ENCODE measurements at regions of chr10 and their contacts with region 1.

Region 1: GRCh38 chr10:124824507-124824906 is 22.9 kb downstream of the ABRAXAS2 start:
- DNase-seq: no peak
- ATAC-seq: no peak
- H3K4me3 ChIP-seq: no peak overlapping the region
- H3K27ac ChIP-seq: no peak overlapping the region
- H3K4me1 ChIP-seq: no peaks in the 10 kb centered on the region
- H3K27me3 ChIP-seq: no peaks in the 10 kb centered on the region
- CTCF ChIP-seq: no peak

Region 2: DNA sequence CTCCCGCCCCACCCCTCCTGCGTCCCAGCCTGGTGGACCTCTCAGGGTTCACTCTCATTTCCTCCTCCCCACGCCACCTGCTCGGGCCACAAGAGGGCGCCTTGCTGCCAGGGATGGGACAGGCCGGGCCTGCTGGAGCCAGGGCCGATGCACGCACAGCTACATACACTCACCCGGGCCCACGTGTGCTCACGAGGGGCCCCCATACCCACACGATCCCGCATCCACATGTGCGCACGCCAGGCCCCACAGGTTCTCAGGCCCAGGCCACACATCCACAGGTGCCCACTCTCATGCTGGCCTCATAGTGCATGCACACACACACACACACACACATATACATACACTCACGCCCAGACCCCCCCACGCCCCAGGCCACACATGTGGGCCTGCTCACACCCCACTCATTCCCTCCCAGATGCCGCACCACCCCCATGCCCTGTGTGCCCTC is 294.3 kb before region 1 on chr10:
- intact Hi-C with region 1: loop called in 1 of 2 experiments (anchors 5 kb)
- DNase-seq: peak; percentile 60 to 98 (median 88)
- ATAC-seq: peak; percentile 95
- H3K4me3 ChIP-seq: no peak overlapping the region
- H3K27ac ChIP-seq: no peak overlapping the region
- H3K4me1 ChIP-seq: peaks cover 0 to 21% of the 10 kb centered on the region in 2 donors
- H3K27me3 ChIP-seq: no peaks in the 10 kb centered on the region
- CTCF ChIP-seq: peak; percentile 82 to 92

Region 3: DNA sequence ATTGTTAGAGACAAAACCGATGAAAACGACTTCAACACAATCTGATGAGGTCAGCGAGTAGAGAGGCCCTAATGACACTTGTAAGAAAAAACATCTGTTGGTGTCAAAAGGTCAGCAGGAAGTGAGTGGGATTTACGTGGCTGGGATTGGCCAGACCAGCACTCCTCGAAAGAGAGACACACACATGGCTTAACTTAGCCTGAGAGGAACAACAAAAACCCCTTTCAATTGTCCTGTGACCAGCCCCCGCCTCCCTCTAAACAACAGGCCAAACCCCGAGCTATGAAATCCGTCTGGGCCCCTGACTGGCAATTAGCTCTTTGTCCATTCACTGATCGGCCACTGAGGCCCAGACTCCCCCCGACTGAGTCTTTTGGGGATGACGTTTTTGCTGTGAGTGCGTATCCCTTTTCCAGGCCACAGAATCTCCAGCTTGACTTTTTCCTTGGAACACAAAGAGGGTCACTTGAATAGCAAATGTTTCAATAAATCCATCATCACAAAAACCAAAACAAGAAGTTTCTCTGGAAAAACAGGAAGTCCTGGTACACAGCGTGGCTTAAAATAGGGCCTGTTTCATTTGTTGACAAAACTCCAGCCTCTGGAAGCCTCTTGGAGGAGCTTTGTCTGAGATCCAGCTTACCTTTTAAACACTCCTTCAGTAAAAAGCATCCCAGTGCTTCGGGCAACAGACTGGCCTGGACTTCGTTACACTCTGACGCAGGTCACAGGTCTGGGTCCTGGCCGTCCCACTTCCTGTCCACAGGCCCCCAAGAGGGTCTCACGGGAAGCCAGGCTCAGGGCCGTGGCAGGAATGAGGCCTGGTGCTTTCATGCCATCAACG is 232.9 kb after region 1 on chr10:
- intact Hi-C with region 1: no loop called
- DNase-seq: peak; percentile 47 to 90 (median 68)
- ATAC-seq: peak; percentile 59
- H3K4me3 ChIP-seq: no peak overlapping the region
- H3K27ac ChIP-seq: peak overlapping the region; percentile 78 to 84
- H3K4me1 ChIP-seq: peaks cover 47 to 75% of the 10 kb centered on the region in 2 donors
- H3K27me3 ChIP-seq: no peaks in the 10 kb centered on the region
- CTCF ChIP-seq: no peak